Naive thymus-derived CD8-positive, alpha-beta T cell (primary cell): ENCODE measurements at regions of chr9 and their contacts with region 1.

Region 1: DNA sequence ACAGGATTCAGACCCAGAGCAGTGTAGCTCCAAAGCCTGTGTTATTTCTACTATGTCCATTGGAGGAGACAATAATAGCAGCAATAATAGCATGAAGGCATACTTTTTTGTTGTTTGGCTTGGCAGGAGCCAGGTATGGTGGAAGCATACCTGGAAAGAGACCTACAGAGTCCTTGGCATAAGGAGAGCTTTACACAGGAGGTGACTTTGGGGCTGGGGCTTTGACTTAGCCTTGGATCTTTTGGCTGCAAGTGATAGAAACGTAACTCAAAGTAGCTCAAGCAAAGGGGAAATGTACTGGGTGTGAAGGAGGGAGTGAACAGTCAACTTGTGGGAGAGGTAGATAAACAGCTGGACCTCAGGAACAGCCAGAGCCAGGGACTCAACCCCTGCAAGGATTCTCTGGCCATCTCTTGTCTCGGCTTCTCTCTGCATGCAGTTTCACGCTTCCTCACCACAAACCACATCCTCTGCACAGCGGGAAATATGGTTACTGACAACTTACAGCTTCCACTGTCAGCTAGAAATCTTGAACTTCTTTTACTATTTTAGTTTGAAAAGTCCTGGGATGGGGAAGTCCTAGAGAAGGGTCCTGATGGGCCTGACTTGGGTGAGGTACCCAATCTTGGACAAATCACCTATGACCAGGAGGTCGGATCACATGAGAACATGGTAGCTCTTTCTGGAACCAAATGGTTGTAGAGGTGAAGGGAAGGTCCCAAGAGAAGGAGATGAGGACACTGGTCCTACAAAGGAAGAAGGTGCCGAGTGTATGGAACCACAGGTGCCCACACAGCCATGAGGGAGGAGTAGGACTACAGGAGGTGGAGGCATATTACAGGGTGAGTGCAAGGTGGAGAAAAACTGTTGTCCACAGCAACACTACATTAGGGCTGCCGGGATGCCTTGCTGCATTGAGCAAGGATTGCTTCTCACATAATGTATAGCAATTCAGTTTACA is 47.0 kb upstream of the TGFBR1 start:
- DNase-seq: peak; percentile 32 to 92 (median 64)
- ATAC-seq: peak; percentile 89 to 91
- H3K4me3 Mint-ChIP-seq: peak overlapping the region; percentile 76 to 95 (median 88)
- H3K27ac Mint-ChIP-seq: peak overlapping the region; percentile 19 to 91 (median 73)
- H3K4me1 Mint-ChIP-seq: peaks cover 34 to 83% (median 77%) of the 10 kb centered on the region in 4 donors
- H3K27me3 Mint-ChIP-seq: peaks cover 0 to 4% (median 0%) of the 10 kb centered on the region in 5 donors

Region 2: DNA sequence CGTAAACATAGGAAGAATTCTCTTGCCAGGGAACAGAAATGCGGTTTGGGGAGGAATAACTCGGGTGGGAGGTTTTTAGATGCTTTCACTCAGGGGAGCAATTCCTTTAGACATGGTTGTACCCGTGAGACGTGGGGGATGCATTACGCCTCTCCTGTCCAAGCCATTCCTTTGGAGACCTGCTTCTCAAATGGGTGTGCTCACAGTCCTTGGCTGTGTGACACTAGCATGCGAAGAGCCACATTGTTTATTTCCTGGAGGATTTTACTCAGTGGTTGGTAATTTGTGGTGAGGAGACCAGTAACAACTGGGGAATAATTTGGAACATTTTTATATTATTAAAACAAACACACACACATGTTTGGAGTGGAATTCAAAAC is 95.8 kb before region 1 on chr9:
- POLR2A ChIA-PET with region 1: no interaction called
- DNase-seq: no peak
- ATAC-seq: no peak
- H3K4me3 Mint-ChIP-seq: no peak overlapping the region
- H3K27ac Mint-ChIP-seq: no peak overlapping the region
- H3K4me1 Mint-ChIP-seq: no peaks in the 10 kb centered on the region
- H3K27me3 Mint-ChIP-seq: peaks cover 2 to 9% (median 3%) of the 10 kb centered on the region in 5 donors

Region 3: GRCh38 chr9:99076483-99077171 is 18.7 kb after region 1 on chr9:
- POLR2A ChIA-PET with region 1: interaction called, 26 read pairs
- DNase-seq: peak; percentile 21 to 68 (median 50)
- ATAC-seq: peak; percentile 99
- H3K4me3 Mint-ChIP-seq: peak overlapping the region; percentile 0 to 73 (median 59)
- H3K27ac Mint-ChIP-seq: peak overlapping the region; percentile 40 to 92 (median 81)
- H3K4me1 Mint-ChIP-seq: peaks cover 30 to 65% (median 41%) of the 10 kb centered on the region in 4 donors
- H3K27me3 Mint-ChIP-seq: no peaks in the 10 kb centered on the region